ENCODE measurements at regions of chr11 and their contacts with region 1.

Region 1: GRCh38 chr11:122796128-122796717 is 42.1 kb upstream of the CRTAM start:
- DNase-seq: peak; percentile 62
- H3K4me3 Mint-ChIP-seq: no peak overlapping the region
- H3K27ac Mint-ChIP-seq: no peak overlapping the region
- H3K4me1 Mint-ChIP-seq: peaks cover 10% of the 10 kb centered on the region
- H3K27me3 Mint-ChIP-seq: no peaks in the 10 kb centered on the region
- CTCF ChIP-seq: peak; percentile 94

Region 2: DNA sequence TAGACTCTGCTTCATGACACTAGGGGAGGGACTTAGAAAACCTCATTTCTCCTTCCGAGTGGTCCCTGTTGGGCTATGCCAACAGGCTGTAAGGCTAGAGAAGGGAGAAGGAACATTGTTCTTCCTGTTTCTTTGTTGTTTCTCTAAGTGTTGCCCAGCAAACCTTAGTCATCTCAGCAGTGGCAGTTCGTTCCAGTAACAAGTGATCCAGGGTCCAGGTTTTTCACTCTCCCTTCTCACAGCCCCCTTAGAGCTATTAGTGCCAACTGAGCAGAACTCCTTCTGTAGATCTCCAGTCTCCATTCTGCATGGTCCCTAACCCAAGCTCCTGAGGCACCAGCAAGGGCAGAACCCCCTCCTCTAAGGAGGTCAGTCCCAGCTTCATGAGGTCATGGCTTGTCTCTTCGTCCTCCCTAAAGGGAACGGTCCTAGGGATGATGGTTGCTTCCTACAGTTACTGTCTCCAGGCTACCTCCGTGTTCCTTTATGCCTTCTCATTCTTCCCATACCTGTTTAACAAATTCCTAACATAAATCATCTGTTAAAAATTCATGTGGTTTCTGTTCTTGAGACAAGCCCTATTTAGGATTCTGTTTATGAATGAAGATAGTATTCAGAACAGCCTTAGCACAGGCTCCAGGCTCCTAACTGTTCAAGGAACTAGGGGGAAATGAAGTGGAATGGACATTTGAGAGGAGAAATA is 309.3 kb before region 1 on chr11:
- CTCF ChIA-PET with region 1: no interaction called
- POLR2A ChIA-PET with region 1: no interaction called
- intact Hi-C with region 1: no loop called
- DNase-seq: peak; percentile 7
- H3K4me3 Mint-ChIP-seq: no peak overlapping the region
- H3K27ac Mint-ChIP-seq: no peak overlapping the region
- H3K4me1 Mint-ChIP-seq: peaks cover 8% of the 10 kb centered on the region
- H3K27me3 Mint-ChIP-seq: no peaks in the 10 kb centered on the region
- CTCF ChIP-seq: no peak

Region 3: DNA sequence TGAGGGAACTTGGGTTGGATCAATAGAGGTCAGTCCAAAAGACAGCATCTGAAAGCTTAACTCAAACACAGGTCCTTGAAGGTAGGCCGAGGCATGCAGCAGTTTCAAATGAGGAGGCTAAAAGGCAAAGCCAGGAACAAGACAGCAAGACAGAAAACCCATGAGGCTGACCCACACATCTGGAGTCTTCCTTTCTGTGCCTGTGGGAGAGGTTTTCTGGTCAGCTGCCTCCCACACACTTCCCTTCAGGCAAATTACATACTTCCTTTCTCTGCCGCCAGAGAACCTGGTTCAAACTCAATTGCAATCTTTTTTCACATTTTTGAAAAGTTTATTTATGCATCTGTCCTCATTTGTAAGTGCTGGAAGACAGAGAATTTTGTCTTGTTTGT is 12.3 kb after region 1 on chr11:
- CTCF ChIA-PET with region 1: interaction called, 18 read pairs
- POLR2A ChIA-PET with region 1: interaction called, 3 read pairs
- intact Hi-C with region 1: no loop called
- DNase-seq: no peak
- H3K4me3 Mint-ChIP-seq: no peak overlapping the region
- H3K27ac Mint-ChIP-seq: peak overlapping the region; percentile 70
- H3K4me1 Mint-ChIP-seq: peaks cover 32% of the 10 kb centered on the region
- H3K27me3 Mint-ChIP-seq: no peaks in the 10 kb centered on the region
- CTCF ChIP-seq: no peak

Region 4: GRCh38 chr11:122814401-122814800 is 18.2 kb after region 1 on chr11:
- CTCF ChIA-PET with region 1: interaction called, 18 read pairs
- POLR2A ChIA-PET with region 1: interaction called, 3 read pairs
- intact Hi-C with region 1: no loop called
- DNase-seq: no peak
- H3K4me3 Mint-ChIP-seq: no peak overlapping the region
- H3K27ac Mint-ChIP-seq: no peak overlapping the region
- H3K4me1 Mint-ChIP-seq: peaks cover 8% of the 10 kb centered on the region
- H3K27me3 Mint-ChIP-seq: no peaks in the 10 kb centered on the region
- CTCF ChIP-seq: no peak

Region 5: DNA sequence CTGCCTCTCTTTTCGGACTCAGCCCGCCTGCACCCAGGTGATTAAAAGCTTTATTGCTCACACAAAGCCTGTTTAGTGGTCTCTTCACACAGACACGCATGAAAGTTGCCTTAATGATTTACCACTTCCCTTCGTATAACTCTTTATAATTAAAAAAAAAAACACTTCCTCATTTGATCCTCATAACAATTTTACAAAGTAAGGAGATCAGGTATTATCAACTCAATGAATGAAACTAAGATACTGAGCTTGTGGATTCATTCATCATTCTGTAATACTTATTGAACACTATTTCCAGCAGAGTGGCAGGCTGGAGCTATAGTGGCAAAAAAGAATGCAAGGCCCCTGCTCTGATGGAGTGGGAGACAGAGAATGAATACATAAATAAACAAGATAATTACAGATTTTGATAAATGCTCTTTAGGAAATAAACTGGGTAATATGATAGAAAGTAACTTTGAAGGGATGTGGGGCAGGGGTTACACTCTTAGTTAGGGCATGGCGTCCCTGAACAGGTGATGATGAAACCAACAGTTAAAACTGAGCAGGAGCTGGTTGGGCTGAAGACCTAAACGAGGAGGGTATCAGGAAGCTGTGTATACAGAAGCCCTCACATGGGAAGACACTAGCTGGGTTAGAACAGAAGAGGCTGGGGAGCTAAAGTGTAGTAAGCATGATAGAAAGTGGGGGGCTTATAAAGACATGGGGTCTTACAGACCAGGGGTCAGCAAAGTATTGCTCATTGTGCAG is 36.7 kb after region 1 on chr11:
- CTCF ChIA-PET with region 1: interaction called, 16 read pairs
- POLR2A ChIA-PET with region 1: no interaction called
- intact Hi-C with region 1: no loop called
- DNase-seq: no peak
- H3K4me3 Mint-ChIP-seq: no peak overlapping the region
- H3K27ac Mint-ChIP-seq: no peak overlapping the region
- H3K4me1 Mint-ChIP-seq: peaks cover 16% of the 10 kb centered on the region
- H3K27me3 Mint-ChIP-seq: no peaks in the 10 kb centered on the region
- CTCF ChIP-seq: no peak

Region 6: GRCh38 chr11:122843281-122844141 is 47.3 kb after region 1 on chr11:
- CTCF ChIA-PET with region 1: interaction called, 16 read pairs
- POLR2A ChIA-PET with region 1: no interaction called
- intact Hi-C with region 1: no loop called
- DNase-seq: no peak
- H3K4me3 Mint-ChIP-seq: no peak overlapping the region
- H3K27ac Mint-ChIP-seq: no peak overlapping the region
- H3K4me1 Mint-ChIP-seq: no peaks in the 10 kb centered on the region
- H3K27me3 Mint-ChIP-seq: no peaks in the 10 kb centered on the region
- CTCF ChIP-seq: no peak